Activated CD4-positive, alpha-beta memory T cell treated with anti-CD3 and anti-CD28 coated beads for 36 hours (primary cell): ENCODE measurements at regions of chr15 and their contacts with region 1.

Region 1: GRCh38 chr15:65184868-65185738 is at the start of gene CLPX:
- DNase-seq: peak; percentile 93
- H3K4me3 Mint-ChIP-seq: peak within 1 kb of the TSS; percentile 95
- H3K27ac Mint-ChIP-seq: peak within 1 kb of the TSS; percentile 88
- H3K4me1 Mint-ChIP-seq: peaks cover 30% of the 10 kb centered on the region
- H3K27me3 Mint-ChIP-seq: no peaks in the 10 kb centered on the region
- total RNA-seq, gene CLPX: 58.8 to 64.8 TPM

Region 2: DNA sequence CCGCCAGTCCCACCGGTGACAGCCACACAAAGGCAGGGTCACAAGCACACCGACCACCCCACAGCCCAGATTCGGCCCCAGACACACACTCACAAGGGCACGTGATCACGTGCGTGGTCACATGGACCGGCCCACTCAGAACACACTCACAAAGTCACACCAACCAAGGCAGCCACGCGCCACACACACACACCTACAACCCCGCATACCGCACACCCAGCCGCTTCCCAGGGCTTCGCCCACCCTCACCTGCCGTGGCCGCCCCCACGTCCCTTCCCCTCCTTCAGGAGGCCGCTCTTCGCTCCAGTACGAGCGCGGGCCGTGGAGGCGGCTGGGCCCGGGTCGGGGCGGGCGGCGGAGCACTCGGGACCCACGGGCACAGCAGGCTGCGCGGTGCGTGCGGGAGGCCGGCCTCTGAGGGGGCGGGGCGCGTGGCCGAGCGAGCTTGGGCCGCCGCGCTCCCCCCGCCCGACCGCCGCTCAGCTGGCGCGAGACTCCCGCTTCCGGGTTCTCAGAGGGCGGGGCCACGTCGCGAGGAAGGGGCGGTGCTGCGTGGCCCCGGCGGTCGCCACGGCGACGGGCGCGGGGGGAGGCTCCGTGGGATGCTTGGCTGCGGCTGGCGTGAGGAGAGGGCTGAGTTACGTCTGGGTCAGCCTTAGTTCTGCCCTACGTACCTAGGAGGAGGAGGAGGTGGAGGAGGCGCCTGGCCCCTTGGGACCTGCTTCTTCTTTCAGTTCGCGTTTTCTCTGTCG is 195.5 kb before region 1 on chr15 and contains the start of gene SPG21:
- CTCF ChIA-PET with region 1: no interaction called
- POLR2A ChIA-PET with region 1: no interaction called
- intact Hi-C with region 1: loop called (anchors 1 kb)
- DNase-seq: peak; percentile 95
- H3K4me3 Mint-ChIP-seq: peak within 1 kb of the TSS; percentile 96
- H3K27ac Mint-ChIP-seq: peak within 1 kb of the TSS; percentile 82
- H3K4me1 Mint-ChIP-seq: peaks cover 35% of the 10 kb centered on the region
- H3K27me3 Mint-ChIP-seq: no peaks in the 10 kb centered on the region
- total RNA-seq, gene SPG21: 69.3 to 73.0 TPM

Region 3: GRCh38 chr15:65133548-65134200 is 51.4 kb before region 1 on chr15 and contains the start of gene PDCD7:
- CTCF ChIA-PET with region 1: no interaction called
- POLR2A ChIA-PET with region 1: no interaction called
- intact Hi-C with region 1: loop called (anchors 2 kb)
- DNase-seq: peak; percentile 91
- H3K4me3 Mint-ChIP-seq: peak within 1 kb of the TSS; percentile 98
- H3K27ac Mint-ChIP-seq: peak within 1 kb of the TSS; percentile 95
- H3K4me1 Mint-ChIP-seq: peaks cover 28% of the 10 kb centered on the region
- H3K27me3 Mint-ChIP-seq: no peaks in the 10 kb centered on the region
- total RNA-seq, gene PDCD7: 32.8 to 33.0 TPM

Region 4: GRCh38 chr15:65292938-65293518 is 107.9 kb after region 1 on chr15:
- CTCF ChIA-PET with region 1: interaction called, 18 read pairs
- POLR2A ChIA-PET with region 1: interaction called, 5 read pairs
- intact Hi-C with region 1: loop called (anchors 1 kb)
- DNase-seq: no peak
- H3K4me3 Mint-ChIP-seq: no peak overlapping the region
- H3K27ac Mint-ChIP-seq: no peak overlapping the region
- H3K4me1 Mint-ChIP-seq: peaks cover 20% of the 10 kb centered on the region
- H3K27me3 Mint-ChIP-seq: peaks cover 5% of the 10 kb centered on the region

Region 5: GRCh38 chr15:65384895-65385858 is 200.1 kb after region 1 on chr15:
- CTCF ChIA-PET with region 1: interaction called, 4 read pairs
- POLR2A ChIA-PET with region 1: no interaction called
- intact Hi-C with region 1: loop called (anchors 2 kb)
- DNase-seq: peak; percentile 89
- H3K4me3 Mint-ChIP-seq: peak overlapping the region; percentile 77
- H3K27ac Mint-ChIP-seq: peak overlapping the region; percentile 50
- H3K4me1 Mint-ChIP-seq: peaks cover 4% of the 10 kb centered on the region
- H3K27me3 Mint-ChIP-seq: peaks cover 12% of the 10 kb centered on the region